Aorta (tissue), 5 donors: ENCODE measurements at regions of chr1 and their contacts with region 1.

Region 1: GRCh38 chr1:99180343-99180808 is 83.9 kb upstream of the PLPPR4 start:
- DNase-seq: peak in 1 of 2 donors; percentile 74
- ATAC-seq: peak; percentile 89
- H3K4me3 ChIP-seq: no peak overlapping the region
- H3K27ac ChIP-seq: no peak overlapping the region
- H3K4me1 ChIP-seq: no peaks in the 10 kb centered on the region
- H3K27me3 ChIP-seq: no peaks in the 10 kb centered on the region

Region 2: DNA sequence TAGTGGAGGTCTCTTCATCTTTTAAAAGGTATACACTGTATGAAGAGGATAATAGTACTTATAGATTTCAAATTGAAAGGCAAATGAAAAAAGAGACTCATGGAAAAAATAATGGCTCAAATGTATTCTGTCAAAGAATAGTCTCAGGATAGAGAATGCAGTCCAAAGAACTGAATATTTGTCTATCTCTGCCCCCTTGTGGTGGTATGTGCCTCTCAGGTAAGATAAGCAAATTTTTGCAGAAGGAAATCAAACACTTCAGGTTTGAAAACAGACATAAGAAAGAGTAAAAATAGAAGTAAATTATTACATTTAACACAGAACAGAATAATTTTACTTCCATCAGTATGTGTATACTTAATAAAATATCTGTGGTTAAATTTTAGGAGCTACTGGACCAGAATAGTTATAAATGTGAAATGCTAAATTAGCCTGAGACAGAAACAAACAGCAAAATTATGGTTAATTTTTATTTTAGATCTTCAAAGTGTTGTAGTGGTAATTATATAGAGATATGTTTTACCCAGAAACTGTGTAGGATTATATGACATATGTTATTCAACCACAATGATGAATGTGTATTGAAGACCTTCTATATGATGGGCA is 301.1 kb after region 1 on chr1:
- intact Hi-C with region 1: loop called in 1 of 2 experiments (anchors 2 kb)
- DNase-seq: no peak
- ATAC-seq: no peak
- H3K4me3 ChIP-seq: no peak overlapping the region
- H3K27ac ChIP-seq: no peak overlapping the region
- H3K4me1 ChIP-seq: no peaks in the 10 kb centered on the region
- H3K27me3 ChIP-seq: no peaks in the 10 kb centered on the region

Region 3: DNA sequence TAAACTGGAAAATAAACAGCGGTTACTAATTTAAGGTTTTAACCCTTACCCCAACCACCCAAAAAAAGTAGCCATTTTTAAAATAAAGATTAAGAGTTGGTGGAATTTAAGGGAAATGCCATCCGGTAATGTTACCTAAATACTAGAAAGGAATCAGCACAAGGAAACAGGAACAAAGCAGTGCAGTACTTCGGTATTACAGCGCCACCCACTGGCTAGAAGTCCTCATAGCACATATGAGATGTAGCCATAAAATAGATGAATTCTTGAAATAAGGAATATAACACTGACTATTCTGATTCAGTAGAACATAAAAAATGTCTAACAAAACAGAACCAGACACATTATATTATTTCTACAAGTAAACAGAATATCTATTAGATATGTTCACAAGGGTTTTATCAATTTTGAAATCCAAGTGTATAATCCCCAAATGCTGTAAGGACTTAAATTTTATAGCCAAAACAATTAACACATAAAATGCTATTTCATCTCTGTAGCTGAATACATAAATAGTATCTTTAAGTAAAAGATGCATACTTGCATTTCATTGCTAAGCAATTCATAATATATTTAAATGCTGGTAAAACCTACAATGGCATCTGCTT is 527.3 kb after region 1 on chr1:
- intact Hi-C with region 1: loop called (anchors 5 to 10 kb)
- DNase-seq: peak in 1 of 2 donors; percentile 60
- ATAC-seq: peak; percentile 82
- H3K4me3 ChIP-seq: no peak overlapping the region
- H3K27ac ChIP-seq: no peak overlapping the region
- H3K4me1 ChIP-seq: no peaks in the 10 kb centered on the region
- H3K27me3 ChIP-seq: no peaks in the 10 kb centered on the region